GM12878 (cell line): ENCODE measurements at regions of chr10 and their contacts with region 1.

Region 1: DNA sequence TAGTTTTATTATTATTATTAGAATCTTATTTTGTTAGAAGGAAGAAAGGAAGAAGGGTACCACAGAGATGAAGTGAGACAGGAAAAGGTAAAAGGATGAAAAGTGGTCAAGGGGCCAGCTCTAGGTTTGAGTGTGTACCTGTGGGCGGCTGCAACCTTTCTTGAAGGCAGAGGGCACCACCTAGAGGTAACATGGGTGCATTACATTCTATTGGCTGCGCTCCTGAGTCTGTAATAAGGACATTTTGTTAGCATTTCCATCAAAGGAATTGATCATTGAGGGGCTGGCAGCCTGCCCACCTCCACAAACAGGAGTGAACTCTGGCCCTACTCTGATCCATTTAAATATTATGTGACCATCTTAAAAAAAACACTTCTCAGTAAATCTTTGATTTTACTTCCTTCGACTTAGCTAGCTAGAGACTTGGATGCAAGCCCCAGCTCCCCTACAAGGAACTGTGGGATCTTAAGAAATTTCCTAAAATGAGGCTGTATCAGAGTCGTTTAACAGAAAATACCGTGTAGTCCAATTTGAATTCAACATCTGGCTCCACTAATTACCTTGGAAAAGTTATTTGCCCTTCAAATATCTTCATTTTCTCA is 610.4 kb downstream of the IPMK start:
- DNase-seq: no peak
- ATAC-seq: peak; percentile 97
- H3K4me3 ChIP-seq: no peak overlapping the region
- H3K27ac ChIP-seq: no peak overlapping the region
- H3K4me1 ChIP-seq: no peaks in the 10 kb centered on the region
- H3K27me3 ChIP-seq: no peaks in the 10 kb centered on the region
- CTCF ChIP-seq: peak; percentile 73 to 79 (median 78)
- EP300 ChIP-seq: no peak
- POLR2A ChIP-seq: no peak
- RAD21 ChIP-seq: peak; percentile 86

Region 2: GRCh38 chr10:57494471-57494870 is 162.8 kb before region 1 on chr10:
- CTCF ChIA-PET with region 1: no interaction called
- POLR2A ChIA-PET with region 1: no interaction called
- RAD21 ChIA-PET with region 1: no interaction called
- SMC1A ChIA-PET with region 1: no interaction called
- in situ Hi-C with region 1: no loop called
- intact Hi-C with region 1: no loop called
- DNase-seq: no peak
- ATAC-seq: no peak
- H3K4me3 ChIP-seq: no peak overlapping the region
- H3K27ac ChIP-seq: no peak overlapping the region
- H3K4me1 ChIP-seq: no peaks in the 10 kb centered on the region
- H3K27me3 ChIP-seq: no peaks in the 10 kb centered on the region
- CTCF ChIP-seq: no peak
- EP300 ChIP-seq: no peak
- POLR2A ChIP-seq: no peak
- RAD21 ChIP-seq: no peak

Region 3: DNA sequence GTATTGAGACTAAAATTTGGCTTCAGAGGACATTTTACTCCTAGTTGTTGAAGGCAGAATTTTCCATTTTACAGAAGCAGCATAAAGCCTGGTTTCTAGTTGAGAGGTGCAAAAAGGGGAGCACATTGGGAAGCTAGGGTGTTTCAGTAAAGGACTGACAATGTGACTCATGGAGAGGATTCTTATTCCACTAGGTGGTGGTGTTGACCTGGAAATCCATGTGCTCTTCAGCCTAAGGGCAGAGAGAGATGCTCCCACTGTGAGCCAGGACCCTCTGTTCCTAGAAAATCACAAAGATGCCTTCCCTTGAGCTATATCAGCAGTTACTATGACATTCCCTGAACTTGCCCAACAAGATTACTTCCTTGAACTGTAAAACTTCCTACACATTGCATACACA is 77.3 kb before region 1 on chr10:
- CTCF ChIA-PET with region 1: interaction called, 4 read pairs
- POLR2A ChIA-PET with region 1: no interaction called
- RAD21 ChIA-PET with region 1: no interaction called
- SMC1A ChIA-PET with region 1: interaction called, 4 read pairs
- in situ Hi-C with region 1: no loop called
- intact Hi-C with region 1: loop called (anchors 1 kb)
- DNase-seq: no peak
- ATAC-seq: peak; percentile 74; the same call in 2 of the 3 replicates
- H3K4me3 ChIP-seq: no peak overlapping the region
- H3K27ac ChIP-seq: no peak overlapping the region
- H3K4me1 ChIP-seq: no peaks in the 10 kb centered on the region
- H3K27me3 ChIP-seq: no peaks in the 10 kb centered on the region
- CTCF ChIP-seq: peak; percentile 20 to 41 (median 32); a peak in 4 of 6 replicates
- EP300 ChIP-seq: no peak
- POLR2A ChIP-seq: no peak
- RAD21 ChIP-seq: peak; percentile 50

Region 4: GRCh38 chr10:57673446-57673960 is 16.2 kb after region 1 on chr10:
- CTCF ChIA-PET with region 1: interaction called, 18 read pairs
- POLR2A ChIA-PET with region 1: no interaction called
- RAD21 ChIA-PET with region 1: no interaction called
- SMC1A ChIA-PET with region 1: interaction called, 4 read pairs
- in situ Hi-C with region 1: no loop called
- intact Hi-C with region 1: no loop called
- DNase-seq: no peak
- ATAC-seq: no peak
- H3K4me3 ChIP-seq: no peak overlapping the region
- H3K27ac ChIP-seq: no peak overlapping the region
- H3K4me1 ChIP-seq: no peaks in the 10 kb centered on the region
- H3K27me3 ChIP-seq: no peaks in the 10 kb centered on the region
- CTCF ChIP-seq: no peak
- EP300 ChIP-seq: no peak
- POLR2A ChIP-seq: no peak
- RAD21 ChIP-seq: no peak

Region 5: GRCh38 chr10:58017719-58018367 is 360.6 kb after region 1 on chr10:
- CTCF ChIA-PET with region 1: no interaction called
- POLR2A ChIA-PET with region 1: no interaction called
- RAD21 ChIA-PET with region 1: no interaction called
- SMC1A ChIA-PET with region 1: no interaction called
- in situ Hi-C with region 1: no loop called
- intact Hi-C with region 1: no loop called
- DNase-seq: no peak
- ATAC-seq: no peak
- H3K4me3 ChIP-seq: no peak overlapping the region
- H3K27ac ChIP-seq: no peak overlapping the region
- H3K4me1 ChIP-seq: no peaks in the 10 kb centered on the region
- H3K27me3 ChIP-seq: no peaks in the 10 kb centered on the region
- CTCF ChIP-seq: no peak
- EP300 ChIP-seq: no peak
- POLR2A ChIP-seq: no peak
- RAD21 ChIP-seq: no peak

Region 6: GRCh38 chr10:58064714-58065528 is 407.7 kb after region 1 on chr10:
- CTCF ChIA-PET with region 1: interaction called, 3 read pairs
- POLR2A ChIA-PET with region 1: no interaction called
- RAD21 ChIA-PET with region 1: no interaction called
- SMC1A ChIA-PET with region 1: interaction called, 5 read pairs
- in situ Hi-C with region 1: no loop called
- intact Hi-C with region 1: loop called (anchors 10 kb)
- DNase-seq: no peak
- ATAC-seq: peak; percentile 38
- H3K4me3 ChIP-seq: no peak overlapping the region
- H3K27ac ChIP-seq: no peak overlapping the region
- H3K4me1 ChIP-seq: no peaks in the 10 kb centered on the region
- H3K27me3 ChIP-seq: no peaks in the 10 kb centered on the region; a peak in 1 of 4 replicates
- CTCF ChIP-seq: peak; percentile 54 to 61 (median 58)
- EP300 ChIP-seq: no peak
- POLR2A ChIP-seq: no peak
- RAD21 ChIP-seq: peak; percentile 83

Region 7: GRCh38 chr10:58152673-58153263 is 495.5 kb after region 1 on chr10:
- CTCF ChIA-PET with region 1: interaction called, 11 read pairs
- POLR2A ChIA-PET with region 1: no interaction called
- RAD21 ChIA-PET with region 1: interaction called, 3 read pairs
- SMC1A ChIA-PET with region 1: no interaction called
- in situ Hi-C with region 1: no loop called
- intact Hi-C with region 1: no loop called
- DNase-seq: no peak
- ATAC-seq: peak; percentile 70
- H3K4me3 ChIP-seq: no peak overlapping the region
- H3K27ac ChIP-seq: no peak overlapping the region
- H3K4me1 ChIP-seq: no peaks in the 10 kb centered on the region
- H3K27me3 ChIP-seq: no peaks in the 10 kb centered on the region
- CTCF ChIP-seq: peak; percentile 47 to 64 (median 57); a peak in 5 of 6 replicates
- EP300 ChIP-seq: no peak
- POLR2A ChIP-seq: no peak
- RAD21 ChIP-seq: peak; percentile 58